ENCODE measurements at regions of chr2 and their contacts with region 1.

Region 1: GRCh38 chr2:108607706-108608301 is 73.5 kb downstream of the LIMS1 start:
- DNase-seq: peak; percentile 65
- H3K4me3 Mint-ChIP-seq: no peak overlapping the region
- H3K27ac Mint-ChIP-seq: no peak overlapping the region
- H3K4me1 Mint-ChIP-seq: peaks cover 76% of the 10 kb centered on the region
- H3K27me3 Mint-ChIP-seq: no peaks in the 10 kb centered on the region

Region 2: GRCh38 chr2:108492364-108492763 is 115.4 kb before region 1 on chr2:
- CTCF ChIA-PET with region 1: no interaction called
- POLR2A ChIA-PET with region 1: no interaction called
- DNase-seq: no peak
- H3K4me3 Mint-ChIP-seq: no peak overlapping the region
- H3K27ac Mint-ChIP-seq: no peak overlapping the region
- H3K4me1 Mint-ChIP-seq: peaks cover 7% of the 10 kb centered on the region
- H3K27me3 Mint-ChIP-seq: no peaks in the 10 kb centered on the region

Region 3: GRCh38 chr2:108621087-108621559 is 13.3 kb after region 1 on chr2:
- CTCF ChIA-PET with region 1: interaction called, 64 read pairs
- POLR2A ChIA-PET with region 1: interaction called, 279 read pairs
- DNase-seq: peak; percentile 86
- H3K4me3 Mint-ChIP-seq: peak overlapping the region; percentile 81
- H3K27ac Mint-ChIP-seq: peak overlapping the region; percentile 94
- H3K4me1 Mint-ChIP-seq: peaks cover 76% of the 10 kb centered on the region
- H3K27me3 Mint-ChIP-seq: no peaks in the 10 kb centered on the region

Region 4: GRCh38 chr2:108629417-108629816 is 21.6 kb after region 1 on chr2:
- CTCF ChIA-PET with region 1: interaction called, 365 read pairs
- POLR2A ChIA-PET with region 1: interaction called, 279 read pairs
- DNase-seq: no peak
- H3K4me3 Mint-ChIP-seq: peak overlapping the region; percentile 15
- H3K27ac Mint-ChIP-seq: peak overlapping the region; percentile 69
- H3K4me1 Mint-ChIP-seq: peaks cover 78% of the 10 kb centered on the region
- H3K27me3 Mint-ChIP-seq: no peaks in the 10 kb centered on the region

Region 5: GRCh38 chr2:108825254-108825653 is 217.4 kb after region 1 on chr2:
- CTCF ChIA-PET with region 1: no interaction called
- POLR2A ChIA-PET with region 1: no interaction called
- DNase-seq: no peak
- H3K4me3 Mint-ChIP-seq: no peak overlapping the region
- H3K27ac Mint-ChIP-seq: no peak overlapping the region
- H3K4me1 Mint-ChIP-seq: no peaks in the 10 kb centered on the region
- H3K27me3 Mint-ChIP-seq: no peaks in the 10 kb centered on the region

Measured in activated CD4-positive, alpha-beta memory T cell treated with anti-CD3 and anti-CD28 coated beads, Interleukin-2, amount 10 ng/mL, durations not matched to agents 7 days and 5 days (primary cell).